HepG2 (cell line): ENCODE measurements at regions of chr6 and their contacts with region 1.

Region 1: GRCh38 chr6:21003780-21004541 is 469.7 kb downstream of the CDKAL1 start:
- DNase-seq: peak; percentile 99
- ATAC-seq: peak; percentile 96
- H3K4me3 ChIP-seq: no peak overlapping the region; a peak in 1 of 6 replicates
- H3K27ac ChIP-seq: peak overlapping the region; percentile 65
- H3K4me1 ChIP-seq: peaks cover 63% of the 10 kb centered on the region
- H3K27me3 ChIP-seq: no peaks in the 10 kb centered on the region
- CTCF ChIP-seq: no peak
- EP300 ChIP-seq: peak; percentile 92 to 99; a peak in 3 of 4 replicates
- POLR2A ChIP-seq: no peak
- RAD21 ChIP-seq: no peak

Region 2: DNA sequence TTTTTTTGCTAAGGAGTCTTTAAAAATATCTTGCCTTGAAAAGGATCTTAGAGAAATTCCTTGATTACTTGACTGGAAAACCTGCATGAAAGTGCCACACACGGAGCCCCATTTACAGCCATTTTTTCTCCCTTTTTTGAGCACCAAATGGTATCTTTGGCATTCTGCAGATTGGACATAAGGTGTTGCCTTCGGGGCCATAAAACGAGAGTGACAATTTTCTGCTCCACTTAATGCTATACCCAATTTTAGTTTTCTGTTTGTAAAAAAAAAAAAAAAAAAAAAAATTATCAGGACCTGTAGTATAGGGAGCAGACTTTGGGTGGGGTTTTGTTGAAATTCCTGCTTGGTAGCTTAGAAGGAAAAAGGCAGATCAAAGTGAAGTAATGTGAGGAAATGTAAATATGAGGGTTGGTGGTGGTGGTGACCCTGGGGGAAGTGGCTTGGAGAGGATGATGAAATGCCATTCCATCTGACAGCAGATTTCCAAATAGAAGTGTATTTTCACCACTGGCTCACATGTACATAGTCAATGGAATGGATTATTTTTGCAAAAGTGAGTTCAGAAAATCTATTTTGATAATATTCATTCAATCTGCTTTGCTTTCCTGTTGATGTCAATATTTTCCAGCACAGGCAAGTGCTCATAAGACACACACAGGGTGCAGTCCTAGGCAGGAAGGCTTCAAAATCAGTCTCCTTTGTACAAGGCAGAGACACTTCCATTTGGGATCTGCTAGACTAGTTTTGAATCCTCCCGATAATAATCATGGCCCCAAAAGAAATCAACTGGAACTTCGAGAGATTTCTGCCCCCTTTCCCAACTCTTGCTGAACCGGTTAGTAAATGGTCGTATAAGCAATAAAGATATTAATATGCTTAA is 377.6 kb after region 1 on chr6:
- CTCF ChIA-PET with region 1: no interaction called
- POLR2A ChIA-PET with region 1: no interaction called
- in situ Hi-C with region 1: no loop called
- intact Hi-C with region 1: loop called (anchors 5 kb)
- DNase-seq: peak; percentile 94
- ATAC-seq: peak; percentile 91
- H3K4me3 ChIP-seq: no peak overlapping the region
- H3K27ac ChIP-seq: peak overlapping the region; percentile 53
- H3K4me1 ChIP-seq: peaks cover 61% of the 10 kb centered on the region
- H3K27me3 ChIP-seq: 0 out of 5 replicates have a peak, but pooled peaks cover 0 to 3% of the 10 kb centered on the region in 2 experiments
- CTCF ChIP-seq: 0 out of 2 replicates have a peak, but pooled peaks have one; percentile 8
- EP300 ChIP-seq: peak; percentile 57 to 97; a peak in 3 of 4 replicates
- POLR2A ChIP-seq: no peak
- RAD21 ChIP-seq: no peak